ENCODE measurements at regions of chr20 and their contacts with region 1.

Region 1: GRCh38 chr20:62339647-62340070 is 27.5 kb downstream of the LAMA5 start:
- DNase-seq: peak; percentile 43
- ATAC-seq: peak; percentile 67
- H3K4me3 Mint-ChIP-seq: peak overlapping the region; percentile 86
- H3K27ac Mint-ChIP-seq: peak overlapping the region; percentile 92
- H3K4me1 Mint-ChIP-seq: peaks cover 55% of the 10 kb centered on the region
- H3K27me3 Mint-ChIP-seq: no peaks in the 10 kb centered on the region
- CTCF ChIP-seq: no peak

Region 2: DNA sequence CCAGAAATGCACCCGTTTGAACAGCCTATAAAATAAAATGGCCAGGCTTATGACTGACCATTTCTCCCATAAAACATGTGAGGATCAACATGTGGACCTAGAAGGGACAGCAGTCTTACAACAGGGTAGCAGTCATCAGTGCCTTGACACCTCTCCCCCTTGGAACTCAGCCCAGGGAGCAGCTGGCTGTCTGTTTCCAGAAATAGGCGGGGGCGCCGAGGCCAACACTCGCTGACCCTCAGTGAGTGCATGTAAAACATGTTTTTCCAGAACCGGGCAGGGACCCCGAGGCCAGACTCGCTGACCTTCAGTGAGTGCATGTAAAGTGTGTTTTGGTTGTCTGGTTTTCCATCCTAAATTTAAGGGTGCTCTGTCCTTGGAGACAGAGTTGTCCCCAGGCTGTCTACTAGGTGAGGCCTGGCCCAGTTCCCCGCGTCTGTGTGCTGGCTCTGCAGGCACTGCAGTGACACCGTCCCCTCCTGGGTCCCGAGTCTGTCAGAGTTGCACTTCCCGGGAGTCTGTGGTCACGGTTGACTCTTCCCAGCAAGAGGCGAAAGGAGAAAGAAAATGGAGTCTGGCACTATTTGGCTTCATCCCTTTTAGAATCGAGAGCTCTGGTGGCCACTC is 56.7 kb before region 1 on chr20:
- CTCF ChIA-PET with region 1: no interaction called
- POLR2A ChIA-PET with region 1: interaction called, 13 read pairs
- intact Hi-C with region 1: no loop called
- DNase-seq: no peak
- ATAC-seq: no peak
- H3K4me3 Mint-ChIP-seq: no peak overlapping the region
- H3K27ac Mint-ChIP-seq: no peak overlapping the region
- H3K4me1 Mint-ChIP-seq: no peaks in the 10 kb centered on the region
- H3K27me3 Mint-ChIP-seq: no peaks in the 10 kb centered on the region
- CTCF ChIP-seq: no peak

Region 3: GRCh38 chr20:62321521-62321948 is 18.1 kb before region 1 on chr20:
- CTCF ChIA-PET with region 1: no interaction called
- POLR2A ChIA-PET with region 1: no interaction called
- intact Hi-C with region 1: loop called (anchors 1 kb)
- DNase-seq: no peak
- ATAC-seq: peak; percentile 53
- H3K4me3 Mint-ChIP-seq: no peak overlapping the region
- H3K27ac Mint-ChIP-seq: no peak overlapping the region
- H3K4me1 Mint-ChIP-seq: no peaks in the 10 kb centered on the region
- H3K27me3 Mint-ChIP-seq: no peaks in the 10 kb centered on the region
- CTCF ChIP-seq: no peak

Region 4: GRCh38 chr20:62368976-62369814 is 29.5 kb after region 1 on chr20:
- CTCF ChIA-PET with region 1: no interaction called
- POLR2A ChIA-PET with region 1: interaction called, 21 read pairs
- intact Hi-C with region 1: loop called (anchors 1 kb)
- DNase-seq: no peak
- ATAC-seq: no peak
- H3K4me3 Mint-ChIP-seq: no peak overlapping the region
- H3K27ac Mint-ChIP-seq: no peak overlapping the region
- H3K4me1 Mint-ChIP-seq: peaks cover 16% of the 10 kb centered on the region
- H3K27me3 Mint-ChIP-seq: peaks cover 2% of the 10 kb centered on the region
- CTCF ChIP-seq: no peak

Region 5: DNA sequence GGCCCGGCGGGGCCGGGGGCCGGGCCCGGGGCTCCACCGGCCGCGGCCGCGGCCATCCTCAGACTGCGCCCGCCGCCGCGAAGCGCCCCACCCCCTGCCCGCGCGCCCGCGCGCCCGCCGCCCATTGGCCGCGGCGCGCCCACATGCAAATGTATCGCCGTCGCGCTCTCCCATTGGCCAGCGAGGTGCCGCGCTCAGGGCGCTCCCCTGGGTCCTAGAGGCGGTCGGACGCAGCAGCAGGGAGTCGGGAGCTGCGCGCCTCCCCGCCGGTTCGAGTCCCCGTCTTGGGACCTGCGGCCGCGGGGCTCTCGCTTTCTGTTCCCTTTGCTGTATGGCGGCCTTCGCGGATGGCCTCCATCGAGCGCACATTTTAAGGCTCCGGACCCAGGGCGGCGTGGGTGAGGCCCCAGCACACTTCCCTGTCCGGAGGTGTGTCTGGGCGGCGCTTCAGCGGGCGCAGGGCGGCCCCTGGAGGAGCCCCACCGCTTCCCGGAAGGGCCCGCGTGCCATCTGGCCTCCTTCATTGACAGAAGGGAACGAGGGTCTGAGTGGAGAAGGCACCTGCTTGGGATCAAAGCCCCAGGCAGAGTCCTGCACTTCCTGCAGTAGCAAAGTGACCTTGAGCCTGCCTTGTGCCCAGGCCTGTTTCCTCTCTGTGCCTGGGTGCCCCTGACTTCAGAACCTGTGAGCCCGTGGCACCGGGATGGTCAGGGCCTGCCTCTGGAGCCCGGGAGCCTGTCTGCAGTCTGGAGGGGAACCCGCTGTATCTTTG is 67.7 kb after region 1 on chr20 and contains the start of gene CABLES2:
- CTCF ChIA-PET with region 1: no interaction called
- POLR2A ChIA-PET with region 1: no interaction called
- intact Hi-C with region 1: loop called (anchors 2 kb)
- DNase-seq: peak; percentile 90
- ATAC-seq: peak; percentile 90
- H3K4me3 Mint-ChIP-seq: peak within 1 kb of the TSS; percentile 88
- H3K27ac Mint-ChIP-seq: peak within 1 kb of the TSS; percentile 86
- H3K4me1 Mint-ChIP-seq: peaks cover 36% of the 10 kb centered on the region
- H3K27me3 Mint-ChIP-seq: no peaks in the 10 kb centered on the region
- CTCF ChIP-seq: no peak
- total RNA-seq, gene CABLES2: 6.6 and 7.0 TPM in 2 replicates

Region 6: GRCh38 chr20:63101781-63102719 is 762.4 kb after region 1 on chr20:
- CTCF ChIA-PET with region 1: no interaction called
- POLR2A ChIA-PET with region 1: no interaction called
- intact Hi-C with region 1: no loop called
- DNase-seq: peak; percentile 47
- ATAC-seq: peak; percentile 74
- H3K4me3 Mint-ChIP-seq: peak overlapping the region; percentile 85
- H3K27ac Mint-ChIP-seq: peak overlapping the region; percentile 51
- H3K4me1 Mint-ChIP-seq: peaks cover 6% of the 10 kb centered on the region
- H3K27me3 Mint-ChIP-seq: peaks cover 4% of the 10 kb centered on the region
- CTCF ChIP-seq: no peak

Measured in activated B cell treated with CpG ODN at 0.5 μM for 24 hours (primary cell).